CD8-positive, alpha-beta T cell (primary cell): ENCODE measurements at regions of chr4 and their contacts with region 1.

Region 1: DNA sequence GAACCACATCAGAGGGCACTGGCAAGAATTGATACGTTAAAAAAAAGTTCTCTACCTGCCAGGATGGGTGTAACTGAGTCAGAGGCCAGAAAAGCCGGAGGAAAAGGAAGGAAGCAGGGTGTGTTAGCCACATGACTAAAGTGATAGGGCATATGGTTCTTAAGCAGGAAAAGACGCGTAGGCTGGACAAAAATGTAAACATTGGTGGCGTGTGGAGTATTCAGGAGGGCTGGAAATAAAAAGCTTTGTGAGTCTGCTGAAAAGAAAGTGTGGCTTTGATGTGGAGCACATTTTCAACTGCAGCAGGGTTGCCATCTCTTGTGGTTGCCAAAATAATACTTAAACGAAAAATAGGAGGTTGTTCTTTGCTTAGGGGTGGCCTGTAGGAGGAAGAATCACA is 186.5 kb upstream of the RPL34 start:
- DNase-seq: peak in 8 of 9 experiments; percentile 13 to 75 (median 46)
- ATAC-seq: peak; percentile 78
- H3K4me3 ChIP-seq: peak overlapping the region in 1 of 2 experiments; percentile 23
- H3K4me3 Mint-ChIP-seq: peak overlapping the region; percentile 52
- H3K27ac ChIP-seq: peak overlapping the region; percentile 21 to 47
- H3K27ac Mint-ChIP-seq: peak overlapping the region; percentile 89
- H3K4me1 ChIP-seq: peaks cover 32% of the 10 kb centered on the region
- H3K4me1 Mint-ChIP-seq: peaks cover 53% of the 10 kb centered on the region
- H3K27me3 ChIP-seq: no peaks in the 10 kb centered on the region
- H3K27me3 Mint-ChIP-seq: no peaks in the 10 kb centered on the region
- CTCF ChIP-seq: no peak

Region 2: GRCh38 chr4:108355186-108355901 is 78.5 kb before region 1 on chr4:
- CTCF ChIA-PET with region 1: no interaction called
- POLR2A ChIA-PET with region 1: no interaction called
- intact Hi-C with region 1: loop called in 1 of 2 experiments (anchors 5 kb)
- DNase-seq: peak in 6 of 9 experiments; percentile 22 to 85 (median 41)
- ATAC-seq: peak; percentile 87
- H3K4me3 ChIP-seq: peak overlapping the region in 1 of 2 experiments; percentile 10
- H3K4me3 Mint-ChIP-seq: peak overlapping the region; percentile 55
- H3K27ac ChIP-seq: peak overlapping the region; percentile 51 to 54
- H3K27ac Mint-ChIP-seq: peak overlapping the region; percentile 91
- H3K4me1 ChIP-seq: peaks cover 47% of the 10 kb centered on the region
- H3K4me1 Mint-ChIP-seq: peaks cover 66% of the 10 kb centered on the region
- H3K27me3 ChIP-seq: peaks cover 0 to 3% of the 10 kb centered on the region in 2 experiments
- H3K27me3 Mint-ChIP-seq: no peaks in the 10 kb centered on the region
- CTCF ChIP-seq: no peak